Activated CD8-positive, alpha-beta T cell treated with anti-CD3 and anti-CD28 coated beads, Interleukin-2, amount 10 ng/mL, durations not matched to agents 7 days and 5 days (primary cell): ENCODE measurements at regions of chr2 and their contacts with region 1.

Region 1: GRCh38 chr2:38947240-38948239 is 57.9 kb downstream of the ARHGEF33 start:
- DNase-seq: peak; percentile 84
- ATAC-seq: peak; percentile 93
- H3K4me3 Mint-ChIP-seq: no peak overlapping the region
- H3K27ac Mint-ChIP-seq: no peak overlapping the region
- H3K4me1 Mint-ChIP-seq: no peaks in the 10 kb centered on the region
- H3K27me3 Mint-ChIP-seq: peaks cover 3% of the 10 kb centered on the region

Region 2: GRCh38 chr2:38788306-38788705 is 159.2 kb before region 1 on chr2:
- CTCF ChIA-PET with region 1: no interaction called
- POLR2A ChIA-PET with region 1: no interaction called
- DNase-seq: no peak
- ATAC-seq: no peak
- H3K4me3 Mint-ChIP-seq: no peak overlapping the region
- H3K27ac Mint-ChIP-seq: no peak overlapping the region
- H3K4me1 Mint-ChIP-seq: no peaks in the 10 kb centered on the region
- H3K27me3 Mint-ChIP-seq: no peaks in the 10 kb centered on the region

Region 3: DNA sequence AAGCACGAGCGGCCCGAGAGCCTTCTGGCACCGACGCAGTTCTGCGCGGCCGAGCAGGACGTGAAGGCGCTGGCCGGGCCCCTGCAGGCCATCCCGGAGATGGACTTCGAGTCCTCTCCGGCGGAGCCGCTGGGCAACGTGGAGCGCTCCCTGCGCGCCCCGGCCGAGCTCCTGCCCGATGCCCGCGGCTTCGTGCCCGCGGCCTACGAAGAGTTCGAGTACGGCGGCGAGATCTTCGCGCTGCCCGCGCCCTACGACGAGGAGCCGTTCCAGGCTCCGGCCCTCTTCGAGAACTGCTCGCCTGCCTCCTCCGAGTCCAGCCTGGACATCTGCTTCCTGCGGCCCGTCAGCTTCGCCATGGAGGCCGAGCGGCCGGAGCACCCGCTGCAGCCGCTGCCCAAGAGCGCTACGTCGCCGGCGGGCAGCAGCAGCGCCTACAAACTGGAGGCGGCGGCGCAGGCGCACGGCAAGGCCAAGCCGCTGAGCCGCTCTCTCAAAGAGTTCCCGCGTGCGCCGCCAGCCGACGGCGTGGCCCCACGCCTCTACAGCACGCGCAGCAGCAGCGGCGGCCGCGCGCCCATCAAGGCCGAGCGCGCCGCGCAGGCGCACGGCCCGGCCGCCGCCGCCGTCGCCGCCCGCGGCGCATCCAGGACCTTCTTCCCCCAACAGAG is 12.5 kb after region 1 on chr2:
- CTCF ChIA-PET with region 1: interaction called, 20 read pairs
- POLR2A ChIA-PET with region 1: no interaction called
- DNase-seq: peak; percentile 78
- ATAC-seq: peak; percentile 99
- H3K4me3 Mint-ChIP-seq: peak overlapping the region; percentile 51
- H3K27ac Mint-ChIP-seq: no peak overlapping the region
- H3K4me1 Mint-ChIP-seq: peaks cover 3% of the 10 kb centered on the region
- H3K27me3 Mint-ChIP-seq: peaks cover 39% of the 10 kb centered on the region

Region 4: DNA sequence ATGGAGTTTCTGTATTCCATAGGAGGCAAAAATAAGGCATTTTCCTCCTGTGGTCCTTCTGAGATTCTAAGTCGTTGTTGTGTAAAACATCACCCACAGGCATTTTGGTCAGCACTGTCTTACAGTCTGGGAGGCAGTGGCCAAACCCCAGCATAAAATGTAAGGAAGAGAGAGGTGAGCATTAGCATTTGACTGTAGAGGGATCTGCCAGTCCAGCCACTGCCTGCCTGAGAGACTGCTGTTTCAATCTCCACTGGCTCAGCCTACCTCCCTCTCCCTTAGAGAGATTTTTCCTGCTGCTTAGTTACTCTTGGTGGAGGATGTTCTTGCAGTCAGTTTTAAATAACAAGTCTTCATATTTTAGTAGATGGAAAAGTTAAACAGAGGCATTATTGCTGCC is 19.1 kb after region 1 on chr2:
- CTCF ChIA-PET with region 1: interaction called, 20 read pairs
- POLR2A ChIA-PET with region 1: no interaction called
- DNase-seq: no peak
- ATAC-seq: no peak
- H3K4me3 Mint-ChIP-seq: no peak overlapping the region
- H3K27ac Mint-ChIP-seq: no peak overlapping the region
- H3K4me1 Mint-ChIP-seq: no peaks in the 10 kb centered on the region
- H3K27me3 Mint-ChIP-seq: peaks cover 14% of the 10 kb centered on the region

Region 5: GRCh38 chr2:39059366-39059952 is 111.9 kb after region 1 on chr2:
- CTCF ChIA-PET with region 1: interaction called, 22 read pairs
- POLR2A ChIA-PET with region 1: no interaction called
- DNase-seq: no peak
- ATAC-seq: no peak
- H3K4me3 Mint-ChIP-seq: no peak overlapping the region
- H3K27ac Mint-ChIP-seq: peak overlapping the region; percentile 72
- H3K4me1 Mint-ChIP-seq: peaks cover 31% of the 10 kb centered on the region
- H3K27me3 Mint-ChIP-seq: no peaks in the 10 kb centered on the region

Region 6: GRCh38 chr2:39069890-39070465 is 122.4 kb after region 1 on chr2:
- CTCF ChIA-PET with region 1: no interaction called
- POLR2A ChIA-PET with region 1: no interaction called
- DNase-seq: no peak
- ATAC-seq: no peak
- H3K4me3 Mint-ChIP-seq: no peak overlapping the region
- H3K27ac Mint-ChIP-seq: peak overlapping the region; percentile 58
- H3K4me1 Mint-ChIP-seq: peaks cover 59% of the 10 kb centered on the region
- H3K27me3 Mint-ChIP-seq: no peaks in the 10 kb centered on the region

Region 7: DNA sequence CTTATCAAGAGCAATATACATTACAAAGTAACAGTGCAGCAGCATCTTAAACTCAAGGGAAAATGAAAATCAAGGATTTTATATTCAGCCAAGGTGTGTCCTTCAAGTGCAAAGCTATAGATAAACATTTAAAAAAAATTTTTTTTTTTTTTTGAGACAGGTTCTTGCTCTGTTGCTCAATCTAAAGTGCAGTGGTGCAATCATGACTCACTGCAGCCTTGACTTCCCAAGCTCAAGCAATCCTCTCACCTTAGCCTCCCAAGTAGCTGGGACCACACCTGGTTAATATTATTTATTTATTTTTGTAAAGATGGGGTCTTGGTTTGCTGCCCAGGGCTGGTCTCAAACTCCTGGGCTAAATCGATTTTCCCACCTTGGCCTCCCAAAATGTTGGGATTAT is 287.2 kb after region 1 on chr2:
- CTCF ChIA-PET with region 1: interaction called, 207 read pairs
- POLR2A ChIA-PET with region 1: interaction called, 9 read pairs
- DNase-seq: no peak
- ATAC-seq: no peak
- H3K4me3 Mint-ChIP-seq: no peak overlapping the region
- H3K27ac Mint-ChIP-seq: no peak overlapping the region
- H3K4me1 Mint-ChIP-seq: peaks cover 3% of the 10 kb centered on the region
- H3K27me3 Mint-ChIP-seq: peaks cover 3% of the 10 kb centered on the region

Region 8: GRCh38 chr2:39243476-39244123 is 296.1 kb after region 1 on chr2 and contains the start of gene CDKL4:
- CTCF ChIA-PET with region 1: interaction called, 16 read pairs
- POLR2A ChIA-PET with region 1: interaction called, 4 read pairs
- DNase-seq: no peak
- ATAC-seq: peak; percentile 62
- H3K4me3 Mint-ChIP-seq: peak within 1 kb of the TSS; percentile 76
- H3K27ac Mint-ChIP-seq: peak within 1 kb of the TSS; percentile 81
- H3K4me1 Mint-ChIP-seq: peaks cover 22% of the 10 kb centered on the region
- H3K27me3 Mint-ChIP-seq: no peaks in the 10 kb centered on the region
- total RNA-seq, gene CDKL4: 1.1 TPM